ENCODE measurements at regions of chr9 and their contacts with region 1.

Region 1: DNA sequence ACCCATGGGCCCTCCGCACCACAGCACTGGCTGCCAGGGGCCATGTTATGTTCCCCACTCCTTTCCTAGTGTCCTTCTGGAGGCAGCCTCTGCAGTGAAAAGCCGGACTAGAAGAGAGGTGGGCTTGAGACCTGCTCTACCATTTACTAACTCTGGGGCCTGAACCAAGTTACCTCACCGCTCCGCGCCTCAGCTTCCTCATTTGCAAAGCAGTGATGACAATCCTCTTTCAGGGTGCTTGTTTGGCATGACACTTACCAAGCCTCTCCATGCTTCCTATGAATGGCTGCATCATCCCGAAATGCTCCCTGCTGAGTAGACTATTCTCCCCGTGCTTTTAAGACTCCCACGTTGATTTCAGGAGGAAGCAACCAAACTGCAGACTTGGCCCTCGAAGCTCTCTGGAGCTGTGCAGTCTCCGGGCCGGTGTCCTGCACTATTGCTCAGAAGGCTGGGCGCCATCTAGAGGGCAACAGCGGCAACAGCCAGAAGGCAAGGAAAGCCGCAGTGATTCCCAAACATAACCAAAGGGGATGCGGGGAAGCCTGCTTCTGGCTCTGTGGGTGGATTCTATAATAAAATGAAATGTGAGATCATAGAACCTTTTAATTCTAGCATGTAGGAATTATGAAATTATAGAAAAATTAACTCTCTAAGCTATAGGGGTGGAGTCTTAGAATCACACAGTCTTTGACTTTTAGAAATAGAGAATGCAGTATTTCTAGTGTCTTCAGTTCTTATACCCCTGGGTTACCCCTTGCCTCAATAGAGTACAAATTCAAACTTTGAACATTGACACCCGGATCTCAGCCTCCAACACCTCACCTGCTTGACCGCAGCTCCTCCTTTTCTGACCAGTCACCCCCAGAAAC is 599.8 kb upstream of the BRINP1 start:
- DNase-seq: peak; percentile 83
- H3K4me3 ChIP-seq: no peak overlapping the region
- H3K27ac ChIP-seq: no peak overlapping the region
- H3K4me1 ChIP-seq: peaks cover 0 to 10% (median 6%) of the 10 kb centered on the region in 4 donors
- H3K27me3 ChIP-seq: no peaks in the 10 kb centered on the region
- CTCF ChIP-seq: peak in 3 of 4 experiments; percentile 59 to 92 (median 77)
- EP300 ChIP-seq: no peak
- POLR2A ChIP-seq: no peak

Region 2: DNA sequence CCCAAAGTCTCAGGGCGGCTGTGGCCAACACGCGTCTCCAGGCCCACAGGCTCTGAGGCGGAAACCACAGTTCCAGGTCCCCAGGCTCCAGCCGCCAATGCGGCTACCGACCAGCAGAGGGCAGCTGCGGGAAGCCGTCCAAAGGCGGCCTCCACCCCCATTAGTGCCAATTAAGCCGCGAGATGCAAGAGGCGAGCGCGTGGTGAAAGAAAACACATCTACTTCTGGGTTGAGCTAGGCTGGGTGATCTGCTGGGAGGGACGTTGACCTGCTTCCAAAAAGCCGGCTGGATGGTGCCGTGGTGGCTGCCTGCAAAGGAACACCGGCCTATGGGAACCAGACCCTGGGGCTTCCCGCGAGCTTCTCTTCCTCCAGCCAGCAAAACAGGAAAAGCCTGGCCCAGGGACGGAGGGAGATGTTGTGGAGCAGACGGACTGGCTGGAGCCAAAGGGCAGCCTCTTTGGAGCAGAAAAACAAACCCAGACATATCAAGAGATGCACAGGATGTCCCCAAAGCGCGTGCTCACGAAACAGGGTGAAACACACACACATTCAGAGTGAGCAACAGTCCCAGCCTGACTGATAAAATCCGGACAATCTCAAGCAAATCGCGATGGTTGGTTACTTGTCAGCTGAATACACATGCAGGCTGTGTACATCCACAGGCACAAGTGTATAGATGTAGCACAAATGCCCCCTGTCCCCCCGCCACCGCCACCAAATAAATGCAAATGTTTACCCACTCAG is 412.8 kb before region 1 on chr9:
- intact Hi-C with region 1: loop called (anchors 1 kb)
- DNase-seq: peak; percentile 76
- H3K4me3 ChIP-seq: peak overlapping the region in 3 of 4 donors; percentile 29 to 35 (median 34)
- H3K27ac ChIP-seq: no peak overlapping the region
- H3K4me1 ChIP-seq: peaks cover 0 to 9% (median 4%) of the 10 kb centered on the region in 4 donors
- H3K27me3 ChIP-seq: no peaks in the 10 kb centered on the region
- CTCF ChIP-seq: peak; percentile 31 to 85 (median 72)
- EP300 ChIP-seq: no peak
- POLR2A ChIP-seq: no peak

Region 3: GRCh38 chr9:119924742-119925141 is 44.3 kb before region 1 on chr9:
- intact Hi-C with region 1: no loop called
- DNase-seq: no peak
- H3K4me3 ChIP-seq: no peak overlapping the region
- H3K27ac ChIP-seq: no peak overlapping the region
- H3K4me1 ChIP-seq: no peaks in the 10 kb centered on the region
- H3K27me3 ChIP-seq: no peaks in the 10 kb centered on the region
- CTCF ChIP-seq: no peak
- EP300 ChIP-seq: no peak
- POLR2A ChIP-seq: no peak

Measured in sigmoid colon (tissue), 7 donors.